T-cell (primary cell): ENCODE measurements at regions of chr17 and their contacts with region 1.

Region 1: GRCh38 chr17:31274252-31274651 is 22.8 kb downstream of the OMG start:
- DNase-seq: no peak
- ATAC-seq: no peak
- H3K4me3 ChIP-seq: no peak overlapping the region
- H3K4me3 Mint-ChIP-seq: no peak overlapping the region
- H3K27ac ChIP-seq: no peak overlapping the region
- H3K27ac Mint-ChIP-seq: no peak overlapping the region
- H3K4me1 ChIP-seq: no peaks in the 10 kb centered on the region
- H3K4me1 Mint-ChIP-seq: no peaks in the 10 kb centered on the region
- H3K27me3 ChIP-seq: no peaks in the 10 kb centered on the region
- H3K27me3 Mint-ChIP-seq: no peaks in the 10 kb centered on the region

Region 2: GRCh38 chr17:30858561-30859245 is 415.5 kb before region 1 on chr17:
- CTCF ChIA-PET with region 1: no interaction called
- POLR2A ChIA-PET with region 1: interaction called in 1 of 2 experiments, 13 read pairs
- DNase-seq: no peak
- ATAC-seq: no peak
- H3K4me3 ChIP-seq: no peak overlapping the region
- H3K4me3 Mint-ChIP-seq: no peak overlapping the region
- H3K27ac ChIP-seq: no peak overlapping the region
- H3K27ac Mint-ChIP-seq: no peak overlapping the region
- H3K4me1 ChIP-seq: no peaks in the 10 kb centered on the region
- H3K4me1 Mint-ChIP-seq: no peaks in the 10 kb centered on the region
- H3K27me3 ChIP-seq: no peaks in the 10 kb centered on the region
- H3K27me3 Mint-ChIP-seq: no peaks in the 10 kb centered on the region

Region 3: GRCh38 chr17:31339906-31340661 is 65.8 kb after region 1 on chr17:
- CTCF ChIA-PET with region 1: interaction called in 1 of 2 experiments, 3 read pairs
- POLR2A ChIA-PET with region 1: interaction called in 1 of 2 experiments, 11 read pairs
- DNase-seq: no peak
- ATAC-seq: no peak
- H3K4me3 ChIP-seq: no peak overlapping the region
- H3K4me3 Mint-ChIP-seq: no peak overlapping the region
- H3K27ac ChIP-seq: no peak overlapping the region
- H3K27ac Mint-ChIP-seq: no peak overlapping the region
- H3K4me1 ChIP-seq: no peaks in the 10 kb centered on the region
- H3K4me1 Mint-ChIP-seq: no peaks in the 10 kb centered on the region
- H3K27me3 ChIP-seq: no peaks in the 10 kb centered on the region
- H3K27me3 Mint-ChIP-seq: no peaks in the 10 kb centered on the region